ENCODE measurements at regions of chr10 and their contacts with region 1.

Region 1: GRCh38 chr10:32445740-32446535 is at the start of gene CCDC7:
- DNase-seq: peak; percentile 92
- ATAC-seq: peak; percentile 97
- H3K4me3 Mint-ChIP-seq: peak within 1 kb of the TSS; percentile 97
- H3K27ac Mint-ChIP-seq: peak within 1 kb of the TSS; percentile 97
- H3K4me1 Mint-ChIP-seq: peaks cover 12% of the 10 kb centered on the region
- H3K27me3 Mint-ChIP-seq: no peaks in the 10 kb centered on the region
- total RNA-seq, gene CCDC7: 28.4 to 34.5 TPM

Region 2: DNA sequence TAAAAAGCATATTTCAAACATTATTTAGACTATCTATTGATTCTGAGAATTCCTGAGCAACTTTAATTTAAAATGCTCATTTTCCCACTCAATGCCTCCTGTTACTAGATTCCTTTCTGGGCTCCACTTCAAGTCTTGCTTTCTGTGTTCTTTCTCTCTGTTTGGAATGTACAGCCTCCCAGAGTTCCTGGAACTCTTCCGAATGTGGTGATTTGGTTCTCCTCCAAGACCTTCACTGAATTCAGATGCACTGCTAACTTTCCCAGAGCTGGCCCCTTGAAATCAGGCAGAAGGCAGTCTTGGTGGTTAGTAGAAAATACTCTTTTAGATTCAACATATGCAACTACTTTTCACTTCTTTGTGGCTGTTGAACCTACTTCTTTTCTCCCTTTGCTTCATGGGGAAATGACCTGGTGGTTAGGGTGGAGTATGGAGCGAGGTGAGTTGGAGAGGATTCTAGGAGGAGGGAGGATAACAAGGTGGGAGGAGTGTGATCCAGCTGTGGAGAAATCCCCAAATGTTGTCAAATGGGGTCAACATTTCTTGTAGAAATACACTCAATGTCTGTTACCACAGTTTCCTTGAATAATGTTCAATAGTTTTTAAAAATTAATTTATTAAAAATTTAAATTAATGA is 27.9 kb before region 1 on chr10:
- POLR2A ChIA-PET with region 1: no interaction called
- DNase-seq: no peak
- ATAC-seq: no peak
- H3K4me3 Mint-ChIP-seq: no peak overlapping the region
- H3K27ac Mint-ChIP-seq: no peak overlapping the region
- H3K4me1 Mint-ChIP-seq: peaks cover 3% of the 10 kb centered on the region
- H3K27me3 Mint-ChIP-seq: peaks cover 2% of the 10 kb centered on the region

Region 3: DNA sequence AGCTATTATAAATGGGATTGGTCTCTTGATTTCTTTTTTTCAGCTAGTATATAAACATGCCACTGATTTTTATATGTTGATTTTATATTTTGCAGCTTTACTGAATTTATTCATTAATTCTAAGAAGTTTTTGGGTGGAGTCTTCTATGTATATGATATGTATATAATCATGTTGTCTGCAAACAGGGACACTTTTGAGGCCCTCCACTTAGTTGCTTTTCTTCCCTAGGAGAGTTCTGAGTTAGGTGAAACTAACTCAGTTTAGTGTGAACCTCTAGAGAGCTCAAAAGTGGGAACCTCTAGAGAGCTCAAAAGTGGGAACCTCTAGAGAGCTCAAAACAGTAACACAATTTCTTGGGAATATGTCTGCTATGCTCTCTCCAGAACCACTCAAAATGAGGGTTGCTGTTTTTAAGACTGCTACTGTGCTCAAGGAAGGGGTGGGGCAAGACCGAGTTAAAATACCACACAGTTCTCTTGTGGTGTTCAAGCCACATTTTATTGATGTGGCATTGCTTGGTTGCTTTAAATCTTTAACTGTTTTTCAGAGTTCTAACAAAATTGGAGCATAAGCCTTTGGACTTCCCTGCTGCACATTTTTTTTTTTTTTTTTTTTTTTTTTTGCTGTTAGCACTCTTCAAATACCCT is 13.2 kb after region 1 on chr10:
- POLR2A ChIA-PET with region 1: interaction called, 23 read pairs
- DNase-seq: no peak
- ATAC-seq: peak; percentile 100
- H3K4me3 Mint-ChIP-seq: peak overlapping the region; percentile 63
- H3K27ac Mint-ChIP-seq: peak overlapping the region; percentile 84
- H3K4me1 Mint-ChIP-seq: peaks cover 24% of the 10 kb centered on the region
- H3K27me3 Mint-ChIP-seq: no peaks in the 10 kb centered on the region

Measured in activated naive CD8-positive, alpha-beta T cell treated with anti-CD3 and anti-CD28 coated beads, Interleukin-2, amount 10 ng/mL, durations not matched to agents 7 days and 5 days (primary cell).